CD8-positive, alpha-beta T cell (primary cell): ENCODE measurements at regions of chr13 and their contacts with region 1.

Region 1: GRCh38 chr13:19633479-19634255 is at the start of gene MPHOSPH8:
- DNase-seq: peak; percentile 88 to 98 (median 93)
- ATAC-seq: peak; percentile 95
- H3K4me3 ChIP-seq: peak within 1 kb of the TSS; percentile 82 to 89
- H3K4me3 Mint-ChIP-seq: peak within 1 kb of the TSS; percentile 100
- H3K27ac ChIP-seq: peak within 1 kb of the TSS; percentile 88 to 90
- H3K27ac Mint-ChIP-seq: peak within 1 kb of the TSS; percentile 100
- H3K4me1 ChIP-seq: peaks cover 35% of the 10 kb centered on the region
- H3K4me1 Mint-ChIP-seq: peaks cover 33% of the 10 kb centered on the region
- H3K27me3 ChIP-seq: no peaks in the 10 kb centered on the region
- H3K27me3 Mint-ChIP-seq: no peaks in the 10 kb centered on the region
- CTCF ChIP-seq: no peak
- total RNA-seq, gene MPHOSPH8: 32.9 to 35.6 TPM

Region 2: DNA sequence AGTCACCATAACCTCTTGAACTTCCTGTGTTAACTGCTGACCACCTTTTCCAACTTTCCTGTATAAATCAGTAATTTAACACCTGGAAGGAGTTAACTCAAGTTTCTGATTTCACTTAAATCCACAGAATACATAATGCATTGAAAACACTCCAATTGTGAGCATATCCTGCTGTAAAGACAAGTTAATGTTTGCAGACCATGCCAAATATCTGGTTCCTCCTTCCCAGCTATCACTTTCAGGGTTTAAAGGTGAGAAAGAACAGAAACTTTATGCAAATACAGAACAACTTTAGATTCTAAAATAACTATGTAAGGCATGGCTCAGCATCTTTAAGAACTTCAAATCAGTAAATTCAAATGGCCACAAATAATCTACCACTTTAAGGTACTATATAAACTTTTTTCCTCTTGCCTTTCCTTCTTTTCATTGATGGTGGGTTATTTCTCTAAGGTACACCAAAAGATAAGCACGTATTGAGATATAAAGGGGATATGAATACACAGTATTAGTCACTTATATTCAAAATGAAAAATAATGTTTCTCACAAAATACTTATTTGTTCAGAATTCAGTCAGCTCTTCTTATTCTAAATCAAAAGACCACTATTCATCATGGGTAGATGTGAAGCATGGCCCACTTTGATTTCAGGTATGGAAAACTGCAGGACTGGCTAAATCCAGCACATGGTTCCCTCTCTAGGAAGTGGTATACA is 65.7 kb before region 1 on chr13:
- CTCF ChIA-PET with region 1: no interaction called
- POLR2A ChIA-PET with region 1: no interaction called
- intact Hi-C with region 1: loop called in 1 of 2 experiments (anchors 2 kb)
- DNase-seq: no peak
- ATAC-seq: no peak
- H3K4me3 ChIP-seq: no peak overlapping the region
- H3K4me3 Mint-ChIP-seq: no peak overlapping the region
- H3K27ac ChIP-seq: no peak overlapping the region
- H3K27ac Mint-ChIP-seq: no peak overlapping the region
- H3K4me1 ChIP-seq: no peaks in the 10 kb centered on the region
- H3K4me1 Mint-ChIP-seq: no peaks in the 10 kb centered on the region
- H3K27me3 ChIP-seq: peaks cover 0 to 2% of the 10 kb centered on the region in 2 experiments
- H3K27me3 Mint-ChIP-seq: peaks cover 3% of the 10 kb centered on the region
- CTCF ChIP-seq: no peak

Region 3: DNA sequence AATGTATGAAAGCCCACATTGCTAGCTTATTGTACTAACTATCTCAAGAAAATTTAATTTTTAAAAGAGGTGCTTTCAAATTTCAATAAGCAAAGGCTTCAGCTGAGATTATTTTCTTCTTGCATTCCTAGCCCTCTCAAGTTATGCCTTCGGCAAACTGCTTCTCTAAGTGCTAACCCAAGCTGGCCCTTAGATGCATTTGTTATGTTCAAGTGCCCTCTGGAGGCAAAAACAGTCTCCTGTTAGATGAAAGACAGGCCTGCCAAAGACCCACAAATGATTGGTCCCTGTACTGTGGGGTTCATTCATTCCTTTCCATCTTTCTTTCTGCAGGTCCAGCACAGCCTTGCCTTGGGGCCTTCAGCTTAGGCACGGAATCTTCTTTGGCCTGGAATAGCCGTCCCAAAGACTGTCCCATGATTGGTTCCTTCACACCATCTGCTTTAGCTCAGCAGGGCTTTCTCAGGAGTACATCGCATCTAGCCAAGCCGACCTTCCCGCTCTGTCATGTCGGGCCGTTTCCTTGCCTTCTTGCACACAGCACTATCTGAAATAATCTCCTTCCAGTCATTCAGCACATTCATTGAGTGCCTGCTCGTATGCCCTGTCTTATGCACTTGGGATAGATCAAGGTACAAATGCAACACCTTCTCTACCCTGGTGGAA is 45.9 kb before region 1 on chr13:
- CTCF ChIA-PET with region 1: interaction called, 4 read pairs
- POLR2A ChIA-PET with region 1: no interaction called
- intact Hi-C with region 1: loop called (anchors 1 to 2 kb)
- DNase-seq: peak in 3 of 9 experiments; percentile 16 to 61 (median 47)
- ATAC-seq: peak; percentile 8
- H3K4me3 ChIP-seq: peak overlapping the region in 1 of 2 experiments; percentile 53
- H3K4me3 Mint-ChIP-seq: peak overlapping the region; percentile 78
- H3K27ac ChIP-seq: peak overlapping the region in 1 of 2 experiments; percentile 70
- H3K27ac Mint-ChIP-seq: peak overlapping the region; percentile 87
- H3K4me1 ChIP-seq: peaks cover 19% of the 10 kb centered on the region
- H3K4me1 Mint-ChIP-seq: peaks cover 23% of the 10 kb centered on the region
- H3K27me3 ChIP-seq: peaks cover 0 to 2% of the 10 kb centered on the region in 2 experiments
- H3K27me3 Mint-ChIP-seq: no peaks in the 10 kb centered on the region
- CTCF ChIP-seq: peak; percentile 30

Region 4: GRCh38 chr13:19782049-19782726 is 148.5 kb after region 1 on chr13:
- CTCF ChIA-PET with region 1: no interaction called
- POLR2A ChIA-PET with region 1: interaction called, 3 read pairs
- intact Hi-C with region 1: loop called (anchors 2 to 5 kb)
- DNase-seq: peak; percentile 22 to 73 (median 55)
- ATAC-seq: peak; percentile 54
- H3K4me3 ChIP-seq: peak overlapping the region; percentile 94 to 95
- H3K4me3 Mint-ChIP-seq: peak overlapping the region; percentile 99
- H3K27ac ChIP-seq: peak overlapping the region; percentile 89 to 94
- H3K27ac Mint-ChIP-seq: peak overlapping the region; percentile 99
- H3K4me1 ChIP-seq: no peaks in the 10 kb centered on the region
- H3K4me1 Mint-ChIP-seq: peaks cover 6% of the 10 kb centered on the region
- H3K27me3 ChIP-seq: no peaks in the 10 kb centered on the region
- H3K27me3 Mint-ChIP-seq: no peaks in the 10 kb centered on the region
- CTCF ChIP-seq: no peak